Ovary (tissue), 10 donors: ENCODE measurements at regions of chr22 and their contacts with region 1.

Region 1: DNA sequence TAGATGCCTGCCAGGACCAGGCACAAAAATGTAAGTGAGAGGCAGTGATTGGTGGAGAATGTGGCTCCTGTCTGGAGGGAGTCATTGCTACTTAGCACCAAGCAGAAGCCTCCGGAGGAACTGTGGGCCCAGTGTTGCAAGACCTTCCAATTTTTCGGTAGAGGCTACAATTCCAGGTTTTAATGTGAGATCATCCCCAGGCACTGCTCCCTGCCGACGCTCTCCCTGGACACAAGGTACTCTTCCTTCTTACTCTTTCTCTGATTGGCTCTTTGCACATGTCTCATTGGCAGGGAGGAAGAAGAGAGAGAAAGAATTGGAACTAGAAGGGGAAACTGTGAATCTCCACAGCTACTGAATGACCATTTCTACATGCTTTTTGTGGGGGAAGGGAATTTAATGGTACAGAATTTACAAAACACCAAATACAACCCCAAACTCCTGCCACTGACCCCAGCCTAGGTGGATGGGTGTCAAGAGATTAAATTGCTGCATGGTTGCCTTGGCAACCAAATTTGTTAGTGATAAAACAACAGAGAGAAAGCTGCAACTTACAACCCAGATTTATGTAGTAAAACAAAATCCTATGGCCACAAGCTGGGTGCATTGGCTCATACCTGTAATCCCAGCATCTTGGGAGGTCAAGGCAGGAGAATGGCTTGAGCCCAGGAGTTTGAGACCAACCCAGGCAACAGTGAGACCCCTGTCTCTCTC is 53.5 kb upstream of the EP300 start:
- DNase-seq: no peak
- H3K4me3 ChIP-seq: no peak overlapping the region
- H3K27ac ChIP-seq: no peak overlapping the region
- H3K4me1 ChIP-seq: no peaks in the 10 kb centered on the region
- H3K27me3 ChIP-seq: no peaks in the 10 kb centered on the region
- CTCF ChIP-seq: no peak
- EP300 ChIP-seq: no peak
- POLR2A ChIP-seq: no peak

Region 2: DNA sequence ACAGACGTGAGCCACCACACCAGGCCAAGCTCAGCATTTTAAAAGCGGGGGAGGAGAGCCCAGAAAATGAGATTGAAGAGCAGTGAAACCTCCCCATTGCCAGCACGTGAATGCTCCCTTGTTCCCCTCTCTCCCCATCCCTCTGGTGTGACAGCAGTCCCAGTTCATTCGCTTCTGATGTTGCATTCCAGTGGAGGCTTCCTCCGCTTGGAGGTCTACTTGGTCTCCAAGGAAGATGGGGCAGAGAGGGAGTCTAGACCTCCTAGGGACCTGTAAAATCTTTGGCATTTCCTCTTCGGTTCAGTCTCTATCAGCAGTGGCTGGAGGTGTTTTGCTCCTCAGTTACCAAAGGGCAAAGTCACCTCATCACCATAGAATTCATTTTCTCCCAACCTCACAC is 23.3 kb after region 1 on chr22:
- intact Hi-C with region 1: loop called in 1 of 4 experiments (anchors 2 kb)
- DNase-seq: no peak
- H3K4me3 ChIP-seq: no peak overlapping the region
- H3K27ac ChIP-seq: no peak overlapping the region
- H3K4me1 ChIP-seq: no peaks in the 10 kb centered on the region
- H3K27me3 ChIP-seq: no peaks in the 10 kb centered on the region
- CTCF ChIP-seq: no peak
- EP300 ChIP-seq: no peak
- POLR2A ChIP-seq: no peak